Heart right ventricle (tissue), 16 donors: ENCODE measurements at regions of chr7 and their contacts with region 1.

Region 1: DNA sequence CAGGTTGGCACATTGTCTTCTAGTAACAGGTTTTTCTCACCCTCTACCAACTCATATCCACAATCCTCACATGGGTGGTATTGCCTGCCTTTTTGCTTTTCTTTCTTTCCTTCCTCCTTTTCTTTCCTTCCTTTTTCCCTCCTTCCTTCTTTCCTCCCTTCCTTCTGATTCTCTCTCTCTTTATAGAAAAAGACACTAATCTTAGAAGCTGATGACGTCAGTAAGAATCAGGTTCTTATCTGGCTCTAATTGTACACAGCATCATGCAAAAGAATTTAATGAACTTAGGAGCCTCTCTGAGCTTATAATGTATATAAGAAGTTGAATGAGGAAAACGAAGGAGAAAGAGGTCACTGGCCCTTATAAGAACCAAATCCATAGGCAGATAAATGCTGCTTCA is 328.3 kb downstream of the GRM8 start:
- DNase-seq: no peak
- ATAC-seq: no peak
- H3K4me3 ChIP-seq: no peak overlapping the region
- H3K27ac ChIP-seq: no peak overlapping the region
- H3K4me1 ChIP-seq: no peaks in the 10 kb centered on the region
- H3K27me3 ChIP-seq: no peaks in the 10 kb centered on the region
- CTCF ChIP-seq: no peak

Region 2: GRCh38 chr7:126790763-126791162 is 133.7 kb before region 1 on chr7:
- intact Hi-C with region 1: no loop called
- DNase-seq: no peak
- ATAC-seq: no peak
- H3K4me3 ChIP-seq: no peak overlapping the region
- H3K27ac ChIP-seq: no peak overlapping the region
- H3K4me1 ChIP-seq: no peaks in the 10 kb centered on the region
- H3K27me3 ChIP-seq: no peaks in the 10 kb centered on the region
- CTCF ChIP-seq: no peak

Region 3: GRCh38 chr7:126820925-126821324 is 103.6 kb before region 1 on chr7:
- intact Hi-C with region 1: no loop called
- DNase-seq: no peak
- ATAC-seq: no peak
- H3K4me3 ChIP-seq: no peak overlapping the region
- H3K27ac ChIP-seq: no peak overlapping the region
- H3K4me1 ChIP-seq: no peaks in the 10 kb centered on the region
- H3K27me3 ChIP-seq: no peaks in the 10 kb centered on the region
- CTCF ChIP-seq: no peak

Region 4: GRCh38 chr7:126856691-126857291 is 67.7 kb before region 1 on chr7:
- intact Hi-C with region 1: loop called in 1 of 10 experiments (anchors 10 kb)
- DNase-seq: no peak
- ATAC-seq: no peak
- H3K4me3 ChIP-seq: no peak overlapping the region
- H3K27ac ChIP-seq: no peak overlapping the region
- H3K4me1 ChIP-seq: no peaks in the 10 kb centered on the region
- H3K27me3 ChIP-seq: peaks cover 0 to 6% (median 0%) of the 10 kb centered on the region in 7 donors
- CTCF ChIP-seq: peak in 7 of 9 donors; percentile 29 to 59 (median 40)